Natural killer cell (primary cell): ENCODE measurements at regions of chr1 and their contacts with region 1.

Region 1: DNA sequence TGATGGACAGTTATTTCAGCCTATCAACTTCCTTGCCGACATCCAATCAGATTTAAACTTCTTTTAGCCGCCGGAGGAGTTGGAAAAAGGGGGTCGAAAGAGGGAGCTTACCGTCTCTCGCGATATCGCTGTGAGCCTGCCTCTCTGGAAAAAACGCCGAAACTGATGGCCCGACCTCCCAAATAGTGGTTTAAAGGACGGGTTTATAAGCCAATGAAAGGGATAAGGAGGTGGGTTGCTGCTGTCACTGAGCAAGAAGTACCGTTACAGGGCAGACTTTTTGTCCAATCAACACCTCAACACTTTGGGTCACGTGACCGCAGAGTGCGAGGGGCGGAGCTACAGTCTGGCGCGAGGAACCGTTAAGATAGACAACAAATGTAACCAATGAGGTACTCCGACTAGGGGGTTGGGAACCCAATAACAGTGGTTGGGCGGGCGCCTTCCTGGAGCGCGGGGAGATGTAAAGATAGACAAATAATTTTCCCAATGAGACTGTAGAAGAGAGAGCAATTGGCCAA is at the start of gene RBM15:
- DNase-seq: peak; percentile 91 to 100
- ATAC-seq: peak; percentile 66 to 88 (median 74)
- H3K4me3 ChIP-seq: peak within 1 kb of the TSS; percentile 98
- H3K4me3 Mint-ChIP-seq: no peak within 1 kb of the TSS
- H3K27ac ChIP-seq: peak within 1 kb of the TSS; percentile 99
- H3K27ac Mint-ChIP-seq: no peak within 1 kb of the TSS
- H3K4me1 ChIP-seq: peaks cover 30% of the 10 kb centered on the region
- H3K4me1 Mint-ChIP-seq: peaks cover 50 to 55% of the 10 kb centered on the region in 2 donors
- H3K27me3 ChIP-seq: no peaks in the 10 kb centered on the region
- H3K27me3 Mint-ChIP-seq: no peaks in the 10 kb centered on the region
- CTCF ChIP-seq: no peak
- total RNA-seq, gene RBM15: 81.8 to 109 (median 87.0) TPM

Region 2: DNA sequence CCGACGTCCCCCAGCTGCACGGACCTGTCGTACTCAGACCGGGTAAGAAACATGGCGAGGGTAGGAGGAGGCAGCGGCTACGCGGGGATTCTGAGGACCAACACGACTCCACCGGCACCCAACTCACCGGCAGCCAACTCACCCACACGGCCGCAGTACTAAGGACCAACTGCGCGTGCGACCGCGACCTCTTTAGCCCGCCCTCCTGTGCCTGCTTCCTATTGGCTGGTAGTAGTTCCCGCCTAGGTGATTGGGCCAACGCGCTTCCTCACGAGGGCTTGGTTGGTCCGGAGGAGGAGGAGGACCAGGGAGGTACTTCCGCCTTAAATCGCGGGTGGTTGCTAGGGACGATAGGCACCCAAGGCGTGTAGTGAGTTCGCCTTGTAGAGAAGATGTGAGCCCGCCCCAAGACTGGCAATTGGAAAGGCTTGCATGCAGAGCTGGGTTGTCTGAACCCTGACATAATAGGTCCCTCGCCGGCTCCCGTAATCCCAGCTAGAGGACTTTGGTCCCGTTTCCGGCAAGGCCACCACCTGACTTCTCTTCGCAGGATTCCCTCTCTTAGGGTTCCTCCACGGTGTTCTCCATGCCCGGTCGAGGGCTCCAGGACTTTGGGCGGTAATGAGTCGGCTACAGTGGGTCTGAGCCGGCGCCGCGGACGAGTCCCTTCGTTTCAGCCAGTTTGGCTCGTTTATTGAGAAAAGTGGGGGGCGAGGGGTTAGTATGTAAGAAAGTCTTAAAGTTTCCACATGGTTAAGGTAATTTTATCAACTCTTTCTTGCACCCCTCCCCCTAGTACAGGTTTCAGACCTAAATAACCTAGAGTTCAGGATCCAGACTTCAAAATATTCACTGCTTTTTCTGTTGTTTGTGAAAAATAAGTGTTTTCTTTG is 912.4 kb before region 1 on chr1 and contains the start of gene PSMA5:
- intact Hi-C with region 1: loop called (anchors 2 kb)
- DNase-seq: peak; percentile 92 to 98
- ATAC-seq: peak; percentile 87 to 98 (median 94)
- H3K4me3 ChIP-seq: peak within 1 kb of the TSS; percentile 94
- H3K4me3 Mint-ChIP-seq: peak within 1 kb of the TSS; percentile 96
- H3K27ac ChIP-seq: peak within 1 kb of the TSS; percentile 96
- H3K27ac Mint-ChIP-seq: peak within 1 kb of the TSS; percentile 98
- H3K4me1 ChIP-seq: peaks cover 17% of the 10 kb centered on the region
- H3K4me1 Mint-ChIP-seq: peaks cover 36 to 45% of the 10 kb centered on the region in 2 donors
- H3K27me3 ChIP-seq: no peaks in the 10 kb centered on the region
- H3K27me3 Mint-ChIP-seq: peaks cover 0 to 9% of the 10 kb centered on the region in 2 donors
- CTCF ChIP-seq: no peak
- total RNA-seq, gene PSMA5: 54.7 to 76.0 (median 59.6) TPM

Region 3: GRCh38 chr1:110034451-110035235 is 304.3 kb before region 1 on chr1 and contains the start of gene STRIP1:
- intact Hi-C with region 1: loop called (anchors 2 kb)
- DNase-seq: peak; percentile 87 to 97
- ATAC-seq: peak; percentile 92 to 97 (median 95)
- H3K4me3 ChIP-seq: peak within 1 kb of the TSS; percentile 76
- H3K4me3 Mint-ChIP-seq: peak within 1 kb of the TSS; percentile 94
- H3K27ac ChIP-seq: peak within 1 kb of the TSS; percentile 80
- H3K27ac Mint-ChIP-seq: peak within 1 kb of the TSS; percentile 93 to 96
- H3K4me1 ChIP-seq: peaks cover 25% of the 10 kb centered on the region
- H3K4me1 Mint-ChIP-seq: peaks cover 35 to 39% of the 10 kb centered on the region in 2 donors
- H3K27me3 ChIP-seq: no peaks in the 10 kb centered on the region
- H3K27me3 Mint-ChIP-seq: no peaks in the 10 kb centered on the region
- CTCF ChIP-seq: no peak
- total RNA-seq, gene STRIP1: 92.4 to 139 (median 130) TPM

Region 4: DNA sequence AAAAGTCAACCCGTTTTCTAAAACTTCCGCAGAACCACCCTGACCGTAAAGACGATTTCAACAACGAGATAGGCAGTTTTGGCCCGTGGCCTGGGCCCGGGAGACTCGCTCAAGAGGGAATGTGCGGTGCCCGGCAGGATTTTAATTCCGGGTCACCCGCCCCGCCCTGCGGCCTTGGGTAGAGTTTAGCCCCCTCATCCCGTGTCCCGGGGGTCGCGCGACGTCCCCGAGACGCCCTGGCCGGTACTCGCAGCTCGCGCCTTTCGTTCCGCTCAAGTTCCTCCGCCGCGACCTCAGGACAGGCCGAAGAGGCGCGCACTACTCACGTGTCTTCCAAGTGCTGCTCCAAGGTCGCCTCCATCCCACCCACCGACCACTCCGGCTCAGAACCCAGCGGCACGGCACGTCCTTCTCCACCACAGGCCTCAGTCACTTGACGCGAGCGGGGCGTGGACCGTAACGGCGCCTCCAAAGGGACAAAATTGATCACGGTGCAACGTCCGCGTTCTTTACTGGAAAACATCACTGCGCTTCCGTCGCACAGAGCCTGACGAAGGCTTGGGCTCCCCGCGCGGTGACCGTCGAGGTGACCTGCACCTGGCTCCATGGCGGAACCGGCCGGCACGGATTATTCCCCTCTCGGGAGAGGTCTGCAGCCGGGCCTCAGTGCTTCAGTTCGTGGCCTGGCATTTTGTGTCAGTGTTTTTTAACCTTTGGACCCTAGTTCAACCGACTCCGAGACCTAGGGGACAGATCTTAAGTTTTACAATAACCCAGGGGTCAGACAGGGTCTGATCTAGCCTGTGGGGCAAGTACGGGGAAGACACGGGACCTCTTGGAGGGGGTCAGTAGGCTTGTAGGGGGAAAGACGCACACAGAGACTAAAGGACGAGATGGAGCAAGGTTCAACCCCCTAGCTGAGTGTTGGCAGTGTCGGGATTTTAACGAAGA is 68.6 kb after region 1 on chr1 and contains the start of gene LAMTOR5:
- intact Hi-C with region 1: loop called (anchors 1 kb)
- DNase-seq: peak; percentile 89 to 95
- ATAC-seq: peak; percentile 93 to 97 (median 96)
- H3K4me3 ChIP-seq: peak within 1 kb of the TSS; percentile 88
- H3K4me3 Mint-ChIP-seq: peak within 1 kb of the TSS; percentile 99
- H3K27ac ChIP-seq: peak within 1 kb of the TSS; percentile 89
- H3K27ac Mint-ChIP-seq: peak within 1 kb of the TSS; percentile 98 to 100
- H3K4me1 ChIP-seq: peaks cover 20% of the 10 kb centered on the region
- H3K4me1 Mint-ChIP-seq: peaks cover 24 to 30% of the 10 kb centered on the region in 2 donors
- H3K27me3 ChIP-seq: no peaks in the 10 kb centered on the region
- H3K27me3 Mint-ChIP-seq: no peaks in the 10 kb centered on the region
- CTCF ChIP-seq: no peak
- total RNA-seq, gene LAMTOR5: 86.1 to 102 (median 90.4) TPM